Natural killer cell (primary cell): ENCODE measurements at regions of chr1 and their contacts with region 1.

Region 1: GRCh38 chr1:24847995-24848881 is 81.8 kb downstream of the RUNX3 start:
- DNase-seq: peak; percentile 85 to 95
- ATAC-seq: peak; percentile 84 to 95 (median 84)
- H3K4me3 ChIP-seq: peak overlapping the region; percentile 33
- H3K4me3 Mint-ChIP-seq: peak overlapping the region; percentile 78
- H3K27ac ChIP-seq: peak overlapping the region; percentile 87
- H3K27ac Mint-ChIP-seq: peak overlapping the region; percentile 86 to 88
- H3K4me1 ChIP-seq: peaks cover 41% of the 10 kb centered on the region
- H3K4me1 Mint-ChIP-seq: peaks cover 38 to 53% of the 10 kb centered on the region in 2 donors
- H3K27me3 ChIP-seq: no peaks in the 10 kb centered on the region
- H3K27me3 Mint-ChIP-seq: no peaks in the 10 kb centered on the region
- CTCF ChIP-seq: peak; percentile 90

Region 2: DNA sequence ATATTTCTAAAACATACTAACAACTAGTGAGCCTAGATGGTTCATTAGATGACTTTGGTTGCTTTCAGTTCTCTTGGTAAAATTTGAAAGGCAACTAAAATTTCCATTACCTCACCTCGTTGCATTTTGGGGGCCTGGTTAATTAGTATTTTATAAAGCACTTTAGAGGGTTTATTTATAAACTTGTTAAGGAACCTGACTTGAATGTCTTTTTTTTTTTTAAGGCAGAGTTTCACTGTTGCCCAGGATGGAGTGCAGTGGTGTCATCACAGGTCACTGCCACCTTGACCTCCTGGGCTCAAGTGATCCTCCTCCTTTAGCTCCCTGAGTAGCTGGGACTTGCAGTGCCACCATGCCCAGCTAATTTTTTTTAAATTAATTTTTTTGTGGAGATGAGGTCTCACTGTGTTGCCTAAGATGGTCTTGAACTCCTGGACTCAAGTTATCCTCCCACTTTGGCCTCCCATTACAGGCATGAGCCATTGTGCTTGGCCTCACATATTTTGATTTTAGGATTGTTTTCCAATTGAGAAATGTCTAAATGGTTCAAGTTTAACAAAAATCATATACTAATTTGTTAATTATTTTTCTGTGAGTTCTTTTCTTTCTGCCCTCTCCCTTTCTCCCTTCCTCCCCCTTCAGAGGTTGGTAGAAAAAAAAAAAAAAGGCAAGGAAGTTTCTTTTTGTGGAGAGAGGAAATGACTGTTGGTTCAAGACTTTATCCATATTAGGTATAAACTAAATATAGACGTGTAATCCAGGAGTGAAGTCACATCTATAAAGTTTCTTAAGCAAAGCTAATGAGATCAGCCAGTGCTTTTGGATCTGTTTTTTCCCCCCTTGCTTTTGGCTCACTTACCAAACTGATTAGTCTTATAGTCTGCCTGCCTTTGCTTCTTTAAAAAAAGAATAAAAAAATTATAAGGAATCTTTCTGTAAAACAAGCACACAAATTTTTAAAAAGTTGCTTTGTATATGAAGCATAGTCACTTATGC is 78.3 kb before region 1 on chr1:
- intact Hi-C with region 1: no loop called
- DNase-seq: no peak
- ATAC-seq: no peak
- H3K4me3 ChIP-seq: no peak overlapping the region
- H3K4me3 Mint-ChIP-seq: no peak overlapping the region
- H3K27ac ChIP-seq: no peak overlapping the region
- H3K27ac Mint-ChIP-seq: no peak overlapping the region
- H3K4me1 ChIP-seq: no peaks in the 10 kb centered on the region
- H3K4me1 Mint-ChIP-seq: no peaks in the 10 kb centered on the region
- H3K27me3 ChIP-seq: no peaks in the 10 kb centered on the region
- H3K27me3 Mint-ChIP-seq: peaks cover 0 to 3% of the 10 kb centered on the region in 2 donors
- CTCF ChIP-seq: no peak

Region 3: DNA sequence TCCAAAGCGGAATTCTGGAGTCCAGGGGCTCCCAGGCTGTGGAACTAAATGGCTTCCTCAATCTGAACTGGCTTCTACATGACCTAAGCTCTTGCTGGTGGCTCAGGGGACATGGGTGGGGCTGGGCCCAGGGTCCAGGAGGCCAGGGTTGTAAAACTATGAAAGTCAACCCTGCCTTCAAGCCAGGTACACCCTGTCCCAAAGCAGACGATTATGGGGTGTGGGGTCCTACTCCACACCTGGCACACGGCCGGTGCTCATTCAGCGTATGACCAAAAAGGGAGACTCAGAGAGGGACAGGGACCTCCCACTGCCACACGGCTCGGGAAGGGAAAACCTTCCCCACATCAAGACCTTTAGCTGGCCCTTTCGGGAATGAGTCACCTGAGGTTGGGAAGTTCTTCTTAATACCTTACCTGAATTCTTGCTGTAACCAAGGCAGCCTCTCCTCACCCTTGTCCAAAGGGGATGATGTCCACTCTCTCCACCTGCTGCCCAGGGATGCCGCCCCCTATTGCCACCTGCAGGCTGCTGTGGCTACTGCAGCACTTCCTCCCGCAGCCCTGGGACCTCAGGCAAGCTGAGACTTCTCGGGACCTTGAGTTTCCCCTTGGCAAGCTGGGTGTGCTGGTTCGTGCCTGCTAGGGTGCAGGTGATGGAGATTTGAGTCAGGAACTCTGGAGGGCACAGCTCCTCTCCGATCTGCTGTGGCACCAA is 49.7 kb after region 1 on chr1:
- intact Hi-C with region 1: loop called (anchors 1 kb)
- DNase-seq: peak; percentile 65 to 73
- ATAC-seq: peak; percentile 61 to 73 (median 67)
- H3K4me3 ChIP-seq: no peak overlapping the region
- H3K4me3 Mint-ChIP-seq: peak overlapping the region; percentile 52
- H3K27ac ChIP-seq: peak overlapping the region; percentile 55
- H3K27ac Mint-ChIP-seq: peak overlapping the region; percentile 91 to 99
- H3K4me1 ChIP-seq: peaks cover 72% of the 10 kb centered on the region
- H3K4me1 Mint-ChIP-seq: peaks cover 47 to 70% of the 10 kb centered on the region in 2 donors
- H3K27me3 ChIP-seq: no peaks in the 10 kb centered on the region
- H3K27me3 Mint-ChIP-seq: no peaks in the 10 kb centered on the region
- CTCF ChIP-seq: peak; percentile 84

Region 4: GRCh38 chr1:24930204-24931145 is 82.2 kb after region 1 on chr1 and contains the start of gene RUNX3:
- intact Hi-C with region 1: loop called (anchors 2 kb)
- DNase-seq: peak; percentile 94 to 97
- ATAC-seq: peak; percentile 70 to 88 (median 77)
- H3K4me3 ChIP-seq: peak within 1 kb of the TSS; percentile 94
- H3K4me3 Mint-ChIP-seq: peak within 1 kb of the TSS; percentile 97
- H3K27ac ChIP-seq: peak within 1 kb of the TSS; percentile 100
- H3K27ac Mint-ChIP-seq: peak within 1 kb of the TSS; percentile 99
- H3K4me1 ChIP-seq: peaks cover 65% of the 10 kb centered on the region
- H3K4me1 Mint-ChIP-seq: peaks cover 41 to 56% of the 10 kb centered on the region in 2 donors
- H3K27me3 ChIP-seq: no peaks in the 10 kb centered on the region
- H3K27me3 Mint-ChIP-seq: peaks cover 0 to 9% of the 10 kb centered on the region in 2 donors
- CTCF ChIP-seq: no peak
- total RNA-seq, gene RUNX3: 537 to 630 (median 601) TPM

Region 5: DNA sequence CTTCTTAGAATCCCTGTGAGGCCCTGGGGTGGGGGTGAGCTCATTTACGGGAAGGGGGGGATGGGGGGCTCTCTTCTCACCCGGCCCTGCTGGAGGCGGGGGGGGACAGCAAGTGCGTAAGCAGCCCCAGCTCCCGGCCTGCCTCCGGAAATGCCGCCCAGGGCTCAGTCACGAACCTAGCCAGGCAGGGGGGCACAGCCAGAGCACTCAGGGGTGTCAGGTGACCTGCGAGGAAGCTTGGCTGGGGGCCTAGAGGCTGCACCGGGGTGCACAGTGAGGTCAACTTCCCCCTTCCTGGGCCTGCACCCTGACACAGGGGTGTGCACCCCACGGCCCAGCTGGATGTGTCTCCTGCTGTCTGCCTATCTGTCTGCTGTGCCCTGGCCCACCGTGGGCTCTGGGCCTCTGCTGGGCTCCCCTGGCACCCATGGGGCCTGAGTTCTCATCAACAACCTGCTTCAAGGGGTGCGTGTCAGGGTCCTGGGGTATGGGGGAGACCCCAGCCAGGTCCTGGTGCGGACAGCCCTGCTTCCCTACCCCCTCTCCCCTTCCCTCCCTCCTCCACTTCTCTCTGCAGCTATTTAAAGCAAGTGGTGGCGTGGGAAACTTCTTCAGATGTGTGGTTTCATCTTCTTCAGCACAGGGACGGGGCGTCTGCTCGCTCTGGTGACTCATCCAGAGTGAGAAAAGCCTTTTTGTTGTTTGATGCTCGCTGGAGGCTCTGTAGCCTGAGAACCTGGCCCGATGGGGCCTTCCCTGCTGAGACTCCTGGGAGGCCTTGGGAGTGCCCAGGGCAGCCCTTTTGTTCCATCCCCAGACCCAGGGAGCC is 174.3 kb after region 1 on chr1:
- intact Hi-C with region 1: loop called (anchors 2 kb)
- DNase-seq: peak; percentile 90 to 99
- ATAC-seq: peak; percentile 79 to 94 (median 86)
- H3K4me3 ChIP-seq: peak overlapping the region; percentile 17
- H3K4me3 Mint-ChIP-seq: peak overlapping the region; percentile 85
- H3K27ac ChIP-seq: peak overlapping the region; percentile 100
- H3K27ac Mint-ChIP-seq: peak overlapping the region; percentile 93 to 99
- H3K4me1 ChIP-seq: peaks cover 100% of the 10 kb centered on the region
- H3K4me1 Mint-ChIP-seq: peaks cover 42 to 71% of the 10 kb centered on the region in 2 donors
- H3K27me3 ChIP-seq: no peaks in the 10 kb centered on the region
- H3K27me3 Mint-ChIP-seq: no peaks in the 10 kb centered on the region
- CTCF ChIP-seq: no peak

Region 6: DNA sequence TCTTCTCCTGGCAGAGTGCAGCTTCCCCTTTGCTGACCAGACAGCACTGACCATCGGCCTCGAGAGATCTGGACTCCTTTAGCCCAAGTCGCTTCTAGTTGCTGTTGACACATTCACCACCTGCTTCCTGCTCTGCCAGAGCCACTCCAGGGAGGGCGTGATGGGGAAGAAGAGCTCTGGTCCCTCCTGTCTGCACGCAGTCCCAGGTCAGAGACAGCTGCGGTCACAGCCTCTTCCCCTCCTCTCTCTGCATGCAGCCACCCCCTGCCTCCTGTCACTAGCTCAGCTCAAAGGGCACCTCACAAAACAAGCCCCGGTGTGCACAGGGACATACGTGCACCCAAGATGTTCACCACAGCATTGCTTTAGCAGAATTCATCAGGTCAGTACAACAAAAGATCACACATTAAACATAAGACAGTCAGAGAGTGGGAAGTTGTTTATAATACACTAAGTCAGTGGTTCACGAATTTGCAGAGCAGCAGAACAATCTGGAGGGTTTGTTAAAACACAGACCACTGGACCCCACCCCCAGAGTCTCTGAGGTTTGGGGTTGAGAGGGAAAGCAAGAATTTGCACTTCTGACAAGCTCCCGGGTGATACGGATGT is 251.2 kb after region 1 on chr1:
- intact Hi-C with region 1: loop called (anchors 1 kb)
- DNase-seq: peak; percentile 64 to 71
- ATAC-seq: peak; percentile 60 to 77 (median 74)
- H3K4me3 ChIP-seq: peak overlapping the region; percentile 2
- H3K4me3 Mint-ChIP-seq: peak overlapping the region; percentile 78
- H3K27ac ChIP-seq: peak overlapping the region; percentile 54
- H3K27ac Mint-ChIP-seq: peak overlapping the region; percentile 75 to 84
- H3K4me1 ChIP-seq: peaks cover 77% of the 10 kb centered on the region
- H3K4me1 Mint-ChIP-seq: peaks cover 65 to 74% of the 10 kb centered on the region in 2 donors
- H3K27me3 ChIP-seq: no peaks in the 10 kb centered on the region
- H3K27me3 Mint-ChIP-seq: peaks cover 30 to 44% of the 10 kb centered on the region in 2 donors
- CTCF ChIP-seq: no peak

Region 7: GRCh38 chr1:25204797-25205480 is 356.7 kb after region 1 on chr1:
- intact Hi-C with region 1: loop called (anchors 2 kb)
- DNase-seq: peak in 1 of 2 donors; percentile 75
- ATAC-seq: peak; percentile 73 to 87 (median 86)
- H3K4me3 ChIP-seq: no peak overlapping the region
- H3K4me3 Mint-ChIP-seq: no peak overlapping the region
- H3K27ac ChIP-seq: no peak overlapping the region
- H3K27ac Mint-ChIP-seq: no peak overlapping the region
- H3K4me1 ChIP-seq: no peaks in the 10 kb centered on the region
- H3K4me1 Mint-ChIP-seq: no peaks in the 10 kb centered on the region
- H3K27me3 ChIP-seq: no peaks in the 10 kb centered on the region
- H3K27me3 Mint-ChIP-seq: peaks cover 3 to 13% of the 10 kb centered on the region in 2 donors
- CTCF ChIP-seq: peak; percentile 83